Natural killer cell (primary cell): ENCODE measurements at regions of chr15 and their contacts with region 1.

Region 1: GRCh38 chr15:72231066-72231846 is at the start of gene PKM:
- DNase-seq: peak; percentile 77 to 95
- ATAC-seq: peak; percentile 24 to 61 (median 58)
- H3K4me3 ChIP-seq: peak within 1 kb of the TSS; percentile 92
- H3K4me3 Mint-ChIP-seq: peak within 1 kb of the TSS; percentile 98
- H3K27ac ChIP-seq: peak within 1 kb of the TSS; percentile 80
- H3K27ac Mint-ChIP-seq: peak within 1 kb of the TSS; percentile 81 to 94
- H3K4me1 ChIP-seq: peaks cover 46% of the 10 kb centered on the region
- H3K4me1 Mint-ChIP-seq: peaks cover 39 to 52% of the 10 kb centered on the region in 2 donors
- H3K27me3 ChIP-seq: no peaks in the 10 kb centered on the region
- H3K27me3 Mint-ChIP-seq: no peaks in the 10 kb centered on the region
- CTCF ChIP-seq: no peak
- total RNA-seq, gene PKM: 121 to 180 (median 155) TPM

Region 2: GRCh38 chr15:72272213-72273002 is 41.2 kb after region 1 on chr15 and contains the start of gene PARP6:
- intact Hi-C with region 1: loop called (anchors 2 kb)
- DNase-seq: peak; percentile 95 to 99
- ATAC-seq: peak; percentile 94 to 98 (median 96)
- H3K4me3 ChIP-seq: peak within 1 kb of the TSS; percentile 82
- H3K4me3 Mint-ChIP-seq: peak within 1 kb of the TSS; percentile 91
- H3K27ac ChIP-seq: peak within 1 kb of the TSS; percentile 87
- H3K27ac Mint-ChIP-seq: peak within 1 kb of the TSS; percentile 90 to 93
- H3K4me1 ChIP-seq: peaks cover 15% of the 10 kb centered on the region
- H3K4me1 Mint-ChIP-seq: peaks cover 42% of the 10 kb centered on the region in 2 donors
- H3K27me3 ChIP-seq: no peaks in the 10 kb centered on the region
- H3K27me3 Mint-ChIP-seq: peaks cover 0 to 2% of the 10 kb centered on the region in 2 donors
- CTCF ChIP-seq: peak; percentile 30
- total RNA-seq, gene PARP6: 132 to 135 (median 132) TPM

Region 3: DNA sequence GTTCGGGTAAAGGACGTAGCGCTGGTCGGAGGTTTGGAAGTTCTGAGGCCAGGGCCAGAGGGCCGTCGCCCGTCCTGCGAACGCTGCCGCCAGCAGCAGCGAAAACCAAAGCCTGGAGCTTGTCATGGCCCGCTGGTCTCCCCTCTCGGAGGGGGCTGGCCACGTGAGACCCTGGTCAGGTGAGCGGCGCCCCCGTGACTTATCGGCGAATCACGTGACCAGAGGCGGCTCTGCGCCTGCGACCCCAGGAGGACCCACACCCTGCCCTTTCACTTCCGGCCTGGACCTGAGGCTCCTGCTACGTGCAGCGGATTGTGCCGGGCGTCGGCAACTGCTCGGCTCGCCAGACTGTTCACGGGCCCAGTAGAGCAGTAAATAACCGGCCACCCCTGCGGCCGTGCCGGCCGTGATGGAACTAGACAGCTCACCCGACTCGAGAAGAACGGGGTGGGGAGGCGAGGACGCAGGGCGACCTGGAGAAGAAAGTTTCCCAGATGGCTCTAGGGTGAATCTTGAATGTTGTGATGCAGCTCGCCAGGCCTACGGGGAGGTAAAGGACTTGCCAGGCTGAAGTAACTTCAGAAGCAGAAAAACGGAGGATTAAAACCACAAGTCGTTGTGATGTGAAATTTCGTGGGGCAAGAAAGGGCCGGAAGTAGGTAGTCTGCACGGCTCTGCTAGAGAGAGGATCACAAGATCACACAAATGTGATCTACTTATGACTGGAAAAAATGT is 144.8 kb after region 1 on chr15 and contains the start of gene HEXA:
- intact Hi-C with region 1: loop called (anchors 5 kb)
- DNase-seq: peak; percentile 96 to 99
- ATAC-seq: peak; percentile 77 to 92 (median 86)
- H3K4me3 ChIP-seq: peak within 1 kb of the TSS; percentile 90
- H3K4me3 Mint-ChIP-seq: peak within 1 kb of the TSS; percentile 98
- H3K27ac ChIP-seq: peak within 1 kb of the TSS; percentile 86
- H3K27ac Mint-ChIP-seq: peak within 1 kb of the TSS; percentile 96 to 99
- H3K4me1 ChIP-seq: peaks cover 25% of the 10 kb centered on the region
- H3K4me1 Mint-ChIP-seq: peaks cover 35 to 43% of the 10 kb centered on the region in 2 donors
- H3K27me3 ChIP-seq: no peaks in the 10 kb centered on the region
- H3K27me3 Mint-ChIP-seq: no peaks in the 10 kb centered on the region
- CTCF ChIP-seq: no peak
- total RNA-seq, gene HEXA: 154 to 173 (median 172) TPM

Region 4: DNA sequence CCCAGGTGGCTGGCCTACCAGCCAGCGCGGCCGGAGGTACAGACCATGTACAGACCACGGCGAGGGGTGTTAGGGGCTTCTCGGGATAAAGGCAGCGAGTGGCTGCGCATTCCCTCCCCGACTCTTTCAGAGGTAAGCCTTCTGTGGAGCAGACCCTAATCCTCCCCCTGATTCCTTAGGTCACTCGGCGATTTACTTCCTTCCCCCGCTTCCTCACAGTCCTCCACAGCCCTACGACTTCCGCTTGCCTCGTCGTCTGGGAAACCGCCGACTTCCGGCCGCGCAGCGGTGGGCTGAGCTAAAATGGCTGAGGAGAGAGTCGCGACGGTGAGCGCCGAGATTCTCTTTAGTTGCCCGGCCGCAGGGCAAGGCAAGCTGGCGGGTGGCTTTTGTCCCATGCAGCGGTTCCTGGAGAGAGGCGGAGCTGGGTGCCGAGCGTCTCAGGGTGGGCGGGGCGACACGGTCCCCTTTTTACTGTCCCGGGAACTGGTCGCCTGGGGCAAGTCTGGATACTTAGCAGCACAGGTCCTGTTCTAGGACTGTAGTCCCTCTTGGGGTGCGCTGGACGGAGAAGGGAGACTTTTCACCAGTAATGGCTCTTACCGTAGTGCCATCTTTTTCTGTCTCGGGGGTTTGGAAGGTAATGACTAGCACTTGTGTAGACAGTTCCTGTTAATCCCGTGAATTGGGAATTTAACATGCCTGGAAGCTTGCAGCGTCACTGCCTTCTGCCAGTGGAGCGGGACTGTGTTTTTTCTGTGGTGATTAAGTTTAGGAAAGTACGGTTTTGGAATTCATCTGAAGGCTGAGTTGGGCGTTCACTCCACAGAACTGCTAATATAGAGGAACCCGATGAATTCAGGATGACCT is 454.9 kb after region 1 on chr15 and contains the starts of genes BBS4 and HIGD2B:
- intact Hi-C with region 1: loop called (anchors 5 kb)
- DNase-seq: peak; percentile 82 to 92
- ATAC-seq: peak; percentile 95 to 97 (median 95)
- H3K4me3 ChIP-seq: peak within 1 kb of the TSS; percentile 94
- H3K4me3 Mint-ChIP-seq: peak within 1 kb of the TSS; percentile 98
- H3K27ac ChIP-seq: peak within 1 kb of the TSS; percentile 95
- H3K27ac Mint-ChIP-seq: peak within 1 kb of the TSS; percentile 95 to 96
- H3K4me1 ChIP-seq: peaks cover 17% of the 10 kb centered on the region
- H3K4me1 Mint-ChIP-seq: peaks cover 17 to 19% of the 10 kb centered on the region in 2 donors
- H3K27me3 ChIP-seq: no peaks in the 10 kb centered on the region
- H3K27me3 Mint-ChIP-seq: no peaks in the 10 kb centered on the region
- CTCF ChIP-seq: no peak
- total RNA-seq, gene BBS4: 24.7 to 37.2 (median 26.7) TPM
- total RNA-seq, gene HIGD2B: 0.88 to 1.8 (median 1.1) TPM